ENCODE measurements at regions of chr15 and their contacts with region 1.

Region 1: DNA sequence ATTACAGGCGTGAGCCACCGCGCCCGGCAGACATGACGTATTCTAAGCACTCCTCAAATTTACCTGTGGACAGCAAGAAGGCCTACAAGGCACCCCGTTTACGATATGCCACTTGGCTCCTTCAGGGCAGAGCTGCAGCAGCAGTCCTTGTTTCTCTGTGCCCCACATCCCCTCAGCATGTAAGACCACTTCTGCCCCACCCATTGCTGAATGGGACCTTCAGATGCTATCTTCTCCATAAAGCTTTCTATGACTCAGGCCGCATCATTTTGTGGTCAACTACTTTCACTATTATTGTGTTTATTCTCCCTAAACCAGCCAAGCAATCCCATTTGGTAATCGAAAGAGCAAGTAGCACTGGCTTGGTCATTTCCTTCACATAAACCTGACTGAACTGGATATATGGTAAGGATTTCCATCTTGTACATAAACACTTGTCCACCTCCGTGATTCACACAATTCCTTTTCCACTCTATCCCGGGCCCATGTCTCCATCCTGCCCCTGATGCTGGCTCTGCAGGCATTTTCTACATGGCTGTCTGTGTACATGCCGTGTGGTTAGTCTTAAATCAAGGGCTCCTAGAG is 25.7 kb downstream of the LIPC start:
- DNase-seq: peak; percentile 79
- ATAC-seq: peak; percentile 72
- H3K4me3 Mint-ChIP-seq: no peak overlapping the region
- H3K27ac Mint-ChIP-seq: peak overlapping the region; percentile 84
- H3K4me1 Mint-ChIP-seq: peaks cover 78% of the 10 kb centered on the region
- H3K27me3 Mint-ChIP-seq: no peaks in the 10 kb centered on the region
- CTCF ChIP-seq: no peak

Region 2: GRCh38 chr15:58469432-58470353 is 12.2 kb after region 1 on chr15:
- CTCF ChIA-PET with region 1: interaction called, 4 read pairs
- POLR2A ChIA-PET with region 1: interaction called, 16 read pairs
- intact Hi-C with region 1: no loop called
- DNase-seq: peak; percentile 60
- ATAC-seq: no peak
- H3K4me3 Mint-ChIP-seq: no peak overlapping the region
- H3K27ac Mint-ChIP-seq: no peak overlapping the region
- H3K4me1 Mint-ChIP-seq: peaks cover 61% of the 10 kb centered on the region
- H3K27me3 Mint-ChIP-seq: no peaks in the 10 kb centered on the region
- CTCF ChIP-seq: no peak

Region 3: DNA sequence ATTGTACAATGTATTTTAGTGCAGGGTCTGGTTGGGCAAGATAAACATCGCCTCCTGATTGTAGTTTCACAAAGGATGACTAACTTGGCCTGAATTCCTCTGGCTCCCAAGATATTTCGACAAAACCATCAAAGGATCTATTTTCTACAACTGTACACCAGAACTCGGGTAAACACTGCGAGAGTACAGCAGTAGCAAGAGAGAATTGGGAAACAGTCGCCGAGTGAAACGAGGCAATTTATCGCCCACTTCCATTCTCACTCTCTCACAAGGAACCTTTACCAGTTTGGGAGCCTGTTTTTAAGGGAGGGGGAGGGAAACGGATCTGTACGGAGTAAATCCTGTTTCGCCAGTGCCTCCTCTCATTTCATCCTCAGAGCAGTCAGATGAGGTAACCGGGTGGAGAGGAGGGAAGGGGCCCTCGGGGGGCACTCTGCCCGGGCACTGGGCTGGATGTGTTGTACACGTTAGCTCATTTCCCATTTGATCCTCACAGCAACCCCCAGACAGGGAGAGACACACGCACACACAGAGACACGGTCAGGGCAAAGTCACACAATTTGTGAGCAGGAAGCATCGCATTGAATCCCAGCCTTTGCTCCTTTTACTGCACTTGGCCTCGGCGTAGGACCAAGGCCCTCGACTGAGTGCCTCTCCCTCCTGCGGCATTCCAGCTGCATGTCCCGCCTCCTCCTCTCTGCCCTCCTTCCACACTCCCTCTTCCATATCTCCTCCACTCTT is 94.5 kb after region 1 on chr15:
- CTCF ChIA-PET with region 1: no interaction called
- POLR2A ChIA-PET with region 1: no interaction called
- intact Hi-C with region 1: loop called (anchors 1 kb)
- DNase-seq: no peak
- ATAC-seq: no peak
- H3K4me3 Mint-ChIP-seq: no peak overlapping the region
- H3K27ac Mint-ChIP-seq: peak overlapping the region; percentile 77
- H3K4me1 Mint-ChIP-seq: peaks cover 17% of the 10 kb centered on the region
- H3K27me3 Mint-ChIP-seq: no peaks in the 10 kb centered on the region
- CTCF ChIP-seq: no peak

Measured in activated CD8-positive, alpha-beta T cell treated with anti-CD3 and anti-CD28 coated beads for 36 hours (primary cell).